ENCODE measurements at regions of chr7 and their contacts with region 1.

Region 1: GRCh38 chr7:92953657-92954056 is 117.3 kb upstream of the CDK6 start:
- DNase-seq: no peak
- ATAC-seq: no peak
- H3K4me3 ChIP-seq: no peak overlapping the region
- H3K4me3 Mint-ChIP-seq: no peak overlapping the region
- H3K27ac ChIP-seq: no peak overlapping the region
- H3K27ac Mint-ChIP-seq: no peak overlapping the region
- H3K4me1 ChIP-seq: no peaks in the 10 kb centered on the region
- H3K4me1 Mint-ChIP-seq: no peaks in the 10 kb centered on the region
- H3K27me3 ChIP-seq: no peaks in the 10 kb centered on the region
- H3K27me3 Mint-ChIP-seq: peaks cover 9 to 14% of the 10 kb centered on the region in 2 donors

Region 2: DNA sequence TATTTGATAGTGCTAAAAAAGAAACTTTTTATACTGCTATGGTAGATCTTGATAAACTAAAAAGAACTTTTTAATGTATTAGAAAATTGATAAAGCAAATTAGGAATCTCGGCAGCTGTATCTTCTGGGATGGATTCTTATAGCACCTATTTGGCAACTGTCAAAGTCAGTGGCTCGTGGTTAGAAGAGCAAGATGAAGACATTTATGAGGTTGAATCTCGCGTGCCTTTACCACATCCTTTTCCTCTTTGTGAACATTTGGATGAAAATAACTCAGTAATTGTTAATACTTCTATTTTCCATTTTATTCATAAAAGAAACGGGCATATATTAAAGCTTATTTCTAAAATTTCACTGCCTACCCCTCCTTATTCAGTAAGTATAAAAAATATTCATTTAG is 895.6 kb before region 1 on chr7:
- CTCF ChIA-PET with region 1: no interaction called
- POLR2A ChIA-PET with region 1: no interaction called
- DNase-seq: peak in 14 of 35 experiments; percentile 0 to 47 (median 4)
- ATAC-seq: peak; percentile 50 to 86 (median 72)
- H3K4me3 ChIP-seq: no peak overlapping the region
- H3K4me3 Mint-ChIP-seq: peak overlapping the region in 1 of 3 donors; percentile 7
- H3K27ac ChIP-seq: no peak overlapping the region
- H3K27ac Mint-ChIP-seq: no peak overlapping the region
- H3K4me1 ChIP-seq: peaks cover 0 to 14% of the 10 kb centered on the region in 2 experiments
- H3K4me1 Mint-ChIP-seq: peaks cover 15 to 21% (median 18%) of the 10 kb centered on the region in 3 donors
- H3K27me3 ChIP-seq: no peaks in the 10 kb centered on the region
- H3K27me3 Mint-ChIP-seq: no peaks in the 10 kb centered on the region

Region 3: GRCh38 chr7:92877367-92877766 is 76.3 kb before region 1 on chr7:
- CTCF ChIA-PET with region 1: no interaction called
- POLR2A ChIA-PET with region 1: interaction called in 1 of 2 experiments, 10 read pairs
- DNase-seq: peak in 1 of 35 experiments; percentile 12
- ATAC-seq: peak in 1 of 4 experiments; percentile 65
- H3K4me3 ChIP-seq: no peak overlapping the region
- H3K4me3 Mint-ChIP-seq: no peak overlapping the region
- H3K27ac ChIP-seq: no peak overlapping the region
- H3K27ac Mint-ChIP-seq: no peak overlapping the region
- H3K4me1 ChIP-seq: peaks cover 5 to 10% of the 10 kb centered on the region in 2 experiments
- H3K4me1 Mint-ChIP-seq: peaks cover 20 to 36% (median 27%) of the 10 kb centered on the region in 3 donors
- H3K27me3 ChIP-seq: no peaks in the 10 kb centered on the region
- H3K27me3 Mint-ChIP-seq: no peaks in the 10 kb centered on the region

Region 4: DNA sequence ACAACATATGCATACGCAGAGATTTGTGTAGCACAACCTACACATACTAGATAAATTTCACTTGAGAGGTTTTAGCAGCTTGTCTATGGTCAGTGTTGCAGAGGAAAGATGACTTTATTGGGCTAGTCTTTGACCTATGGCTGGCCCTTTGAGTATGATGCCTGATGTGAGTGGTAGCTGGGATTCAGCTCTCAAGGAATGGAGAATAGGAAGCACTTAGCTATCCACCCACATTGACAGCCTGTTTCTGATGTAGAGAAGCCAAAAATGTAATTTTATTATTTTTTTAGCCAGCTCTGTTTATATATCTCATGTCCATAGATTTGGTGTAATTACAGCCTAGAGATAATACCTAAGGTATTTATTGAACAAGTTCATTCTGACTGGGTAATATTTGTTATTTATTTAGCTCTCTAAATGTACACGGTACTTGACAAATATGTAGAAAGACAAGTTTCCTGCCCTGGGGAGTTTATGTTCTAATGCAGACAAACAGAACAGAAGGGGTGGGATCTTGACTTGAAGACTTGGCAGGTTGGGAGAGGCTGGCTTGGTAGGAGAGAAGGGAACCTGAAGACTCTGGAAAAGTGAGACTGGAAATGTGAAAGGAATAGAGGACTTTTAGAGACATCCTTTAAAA is 19.7 kb before region 1 on chr7:
- CTCF ChIA-PET with region 1: no interaction called
- POLR2A ChIA-PET with region 1: no interaction called
- DNase-seq: no peak
- ATAC-seq: no peak
- H3K4me3 ChIP-seq: no peak overlapping the region
- H3K4me3 Mint-ChIP-seq: no peak overlapping the region
- H3K27ac ChIP-seq: no peak overlapping the region
- H3K27ac Mint-ChIP-seq: no peak overlapping the region
- H3K4me1 ChIP-seq: no peaks in the 10 kb centered on the region
- H3K4me1 Mint-ChIP-seq: no peaks in the 10 kb centered on the region
- H3K27me3 ChIP-seq: peaks cover 0 to 2% of the 10 kb centered on the region in 2 experiments
- H3K27me3 Mint-ChIP-seq: peaks cover 0 to 2% of the 10 kb centered on the region in 2 donors

Region 5: DNA sequence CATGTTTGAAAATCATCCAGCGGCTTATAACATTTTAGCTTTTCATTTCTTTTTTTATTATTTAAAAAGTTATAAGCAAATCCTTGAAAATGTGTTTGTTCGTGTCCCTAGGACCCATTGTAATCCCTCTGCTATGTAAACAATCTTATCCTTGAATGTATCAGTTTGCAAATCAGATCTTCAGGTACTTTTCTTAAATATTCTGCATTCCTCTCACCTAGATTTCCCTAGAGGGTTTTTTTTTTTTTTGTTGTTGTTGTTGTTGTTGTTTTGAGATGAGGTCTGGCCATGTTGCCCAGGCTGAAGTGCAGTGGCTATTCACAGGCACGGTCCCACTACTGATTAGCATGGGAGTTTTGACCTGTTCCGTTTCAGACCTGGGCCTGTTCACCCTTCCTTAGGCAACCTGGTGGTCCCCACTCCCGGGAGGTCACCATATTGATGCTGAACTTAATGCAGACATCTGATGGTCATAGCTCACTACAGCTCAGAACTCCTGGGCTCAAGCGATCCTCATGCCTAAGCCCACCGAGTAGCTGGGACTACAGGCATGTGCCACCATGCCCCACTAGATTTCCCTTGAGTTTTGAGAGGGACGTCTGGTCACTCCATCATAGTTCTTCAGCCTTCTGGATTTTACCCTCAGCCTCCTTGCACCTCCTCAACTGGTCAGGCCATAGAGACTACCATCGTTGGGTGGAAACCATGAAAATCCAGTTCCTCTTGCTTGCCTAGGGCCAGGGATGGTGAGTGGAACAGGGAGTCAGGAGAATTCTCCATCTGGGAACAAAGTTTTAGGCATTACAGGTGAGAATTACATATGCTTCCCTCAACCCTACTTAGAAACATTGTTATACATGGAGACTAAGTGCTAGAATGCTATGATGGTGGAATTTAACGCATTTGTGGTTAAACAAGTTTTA is 17.3 kb after region 1 on chr7:
- CTCF ChIA-PET with region 1: interaction called in 1 of 2 experiments, 12 read pairs
- POLR2A ChIA-PET with region 1: interaction called in 1 of 2 experiments, 3 read pairs
- DNase-seq: no peak
- ATAC-seq: no peak
- H3K4me3 ChIP-seq: no peak overlapping the region
- H3K4me3 Mint-ChIP-seq: no peak overlapping the region
- H3K27ac ChIP-seq: no peak overlapping the region
- H3K27ac Mint-ChIP-seq: no peak overlapping the region
- H3K4me1 ChIP-seq: no peaks in the 10 kb centered on the region
- H3K4me1 Mint-ChIP-seq: peaks cover 0 to 4% (median 0%) of the 10 kb centered on the region in 3 donors
- H3K27me3 ChIP-seq: peaks cover 0 to 4% of the 10 kb centered on the region in 2 experiments
- H3K27me3 Mint-ChIP-seq: peaks cover 0 to 4% of the 10 kb centered on the region in 2 donors

Measured in T-cell (primary cell).